H1 (cell line): ENCODE measurements at regions of chr18 and their contacts with region 1.

Region 1: GRCh38 chr18:5073026-5073944 is 123.8 kb downstream of the AKAIN1 start:
- DNase-seq: peak in 1 of 2 experiments; percentile 52
- H3K4me3 ChIP-seq: no peak overlapping the region
- H3K27ac ChIP-seq: no peak overlapping the region
- H3K4me1 ChIP-seq: no peaks in the 10 kb centered on the region
- H3K27me3 ChIP-seq: no peaks in the 10 kb centered on the region; a peak in 1 of 7 replicates
- CTCF ChIP-seq: peak; percentile 14 to 82 (median 63)
- EP300 ChIP-seq: no peak
- POLR2A ChIP-seq: no peak
- RAD21 ChIP-seq: peak; percentile 94 to 98

Region 2: DNA sequence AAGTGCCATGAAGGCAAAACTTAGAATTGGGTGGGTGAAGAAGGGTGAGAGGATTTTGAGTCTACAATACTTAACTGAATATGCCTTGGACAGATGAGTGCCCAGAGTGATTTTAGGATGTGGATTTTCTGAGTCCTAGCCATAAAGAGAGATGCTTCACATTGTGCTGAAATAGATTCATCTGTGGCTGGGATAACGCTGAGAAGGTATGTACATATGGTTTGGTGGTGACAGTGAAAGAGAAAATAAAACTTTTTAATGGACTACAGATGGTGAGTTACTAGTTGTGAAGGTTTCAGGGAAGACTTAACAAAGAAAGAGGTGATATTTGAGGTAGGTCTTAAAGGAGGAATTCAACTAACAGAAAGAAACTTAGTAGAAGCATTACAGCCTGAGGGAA is 142.1 kb before region 1 on chr18:
- CTCF ChIA-PET with region 1: no interaction called
- POLR2A ChIA-PET with region 1: no interaction called
- DNase-seq: no peak
- H3K4me3 ChIP-seq: no peak overlapping the region
- H3K27ac ChIP-seq: no peak overlapping the region
- H3K4me1 ChIP-seq: no peaks in the 10 kb centered on the region
- H3K27me3 ChIP-seq: no peaks in the 10 kb centered on the region
- CTCF ChIP-seq: no peak
- EP300 ChIP-seq: no peak
- POLR2A ChIP-seq: no peak
- RAD21 ChIP-seq: no peak

Region 3: DNA sequence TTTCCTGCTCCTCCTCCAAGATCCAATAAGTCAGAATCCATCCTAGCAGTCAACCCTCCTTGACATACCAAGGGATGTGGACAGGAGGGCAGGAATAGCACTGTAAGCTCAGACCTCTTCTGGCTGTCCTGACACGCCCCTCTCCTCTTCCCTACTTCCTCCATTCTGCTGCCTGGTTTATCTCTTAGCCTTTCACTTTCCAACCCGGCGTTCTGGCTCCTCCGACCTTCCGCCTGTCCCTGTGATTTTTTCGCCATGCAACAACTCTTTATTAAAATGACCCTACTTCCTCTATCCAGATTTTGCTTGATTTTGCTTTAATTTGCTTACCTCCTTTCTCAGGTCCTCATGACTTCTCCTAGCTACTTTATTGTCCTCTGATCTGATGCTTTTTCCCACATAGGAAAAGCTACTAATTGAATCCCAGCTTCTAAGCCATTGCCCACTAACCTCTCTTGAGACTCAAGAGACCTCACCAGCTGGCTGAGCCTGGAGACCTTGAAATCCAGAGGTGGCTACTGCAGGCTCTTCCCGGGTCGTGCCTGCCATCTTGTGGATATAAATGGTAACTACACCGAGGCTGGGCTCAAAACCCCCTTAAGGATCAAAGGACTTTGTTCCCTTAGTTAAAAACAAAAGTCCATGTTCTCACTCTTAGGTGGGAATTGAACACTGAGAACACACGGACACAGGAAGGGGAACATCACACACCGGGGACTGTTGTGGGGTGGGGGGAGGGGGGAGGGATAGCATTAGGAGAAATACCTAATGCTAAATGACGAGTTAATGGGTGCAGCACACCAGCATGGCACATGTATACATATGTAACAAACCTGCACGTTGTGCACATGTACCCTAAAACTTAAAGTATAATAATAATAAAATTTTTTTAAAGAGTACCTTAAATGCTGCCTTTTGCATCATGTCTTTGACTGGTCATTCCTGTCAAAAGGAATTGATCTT is 15.6 kb before region 1 on chr18:
- CTCF ChIA-PET with region 1: interaction called, 10 read pairs
- POLR2A ChIA-PET with region 1: no interaction called
- DNase-seq: peak; percentile 46 to 82
- H3K4me3 ChIP-seq: no peak overlapping the region
- H3K27ac ChIP-seq: no peak overlapping the region
- H3K4me1 ChIP-seq: no peaks in the 10 kb centered on the region
- H3K27me3 ChIP-seq: 0 out of 7 replicates have a peak, but pooled peaks cover 0 to 2% (median 0%) of the 10 kb centered on the region in 4 experiments
- CTCF ChIP-seq: peak; percentile 59 to 85 (median 84)
- EP300 ChIP-seq: no peak
- POLR2A ChIP-seq: no peak
- RAD21 ChIP-seq: peak; percentile 99

Region 4: GRCh38 chr18:5106730-5107129 is 33.4 kb after region 1 on chr18:
- CTCF ChIA-PET with region 1: interaction called, 11 read pairs
- POLR2A ChIA-PET with region 1: interaction called, 4 read pairs
- DNase-seq: no peak
- H3K4me3 ChIP-seq: no peak overlapping the region
- H3K27ac ChIP-seq: no peak overlapping the region
- H3K4me1 ChIP-seq: peaks cover 0 to 4% (median 0%) of the 10 kb centered on the region in 4 experiments; a peak in 2 of 7 replicates
- H3K27me3 ChIP-seq: no peaks in the 10 kb centered on the region
- CTCF ChIP-seq: peak in 2 of 3 experiments; percentile 48 to 65; a peak in 2 of 4 replicates
- EP300 ChIP-seq: no peak
- POLR2A ChIP-seq: no peak
- RAD21 ChIP-seq: peak; percentile 53 to 65